CD8-positive, alpha-beta memory T cell (primary cell): ENCODE measurements at regions of chr17 and their contacts with region 1.

Region 1: DNA sequence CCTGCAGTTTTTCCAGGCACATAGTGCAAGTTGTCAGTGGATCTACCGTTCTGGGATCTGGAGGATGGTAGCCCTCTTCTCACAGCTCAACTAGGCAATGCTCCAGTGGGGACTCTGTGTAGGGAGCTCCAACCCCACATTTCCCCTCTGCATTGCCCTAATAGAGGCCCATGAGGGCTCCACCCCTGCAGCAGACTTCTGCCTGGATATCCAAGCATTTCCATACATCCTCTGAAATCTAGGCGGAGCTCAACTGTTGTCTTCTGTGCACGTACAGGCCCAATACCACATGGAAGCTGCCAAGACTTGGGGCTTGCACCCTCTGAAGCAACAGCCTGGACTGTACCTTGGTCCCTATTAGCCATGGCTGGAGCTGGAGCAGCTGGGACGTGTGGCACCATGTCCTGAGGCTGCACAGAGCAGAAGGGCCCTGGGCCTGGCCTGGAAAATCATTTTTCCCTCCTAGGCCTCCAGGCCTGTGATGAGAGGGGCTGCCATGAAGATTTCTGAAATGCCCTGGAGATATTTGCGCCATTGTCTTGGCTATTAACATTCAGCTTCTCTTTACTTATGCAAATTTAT is 10.9 kb upstream of the MILR1 start:
- DNase-seq: no peak
- H3K4me3 ChIP-seq: no peak overlapping the region
- H3K4me3 Mint-ChIP-seq: no peak overlapping the region
- H3K27ac ChIP-seq: no peak overlapping the region
- H3K27ac Mint-ChIP-seq: no peak overlapping the region
- H3K4me1 ChIP-seq: peaks cover 19% of the 10 kb centered on the region
- H3K4me1 Mint-ChIP-seq: peaks cover 12 to 18% (median 14%) of the 10 kb centered on the region in 3 donors
- H3K27me3 ChIP-seq: no peaks in the 10 kb centered on the region
- H3K27me3 Mint-ChIP-seq: peaks cover 3% of the 10 kb centered on the region in 2 donors

Region 2: GRCh38 chr17:64479650-64480049 is 41.6 kb after region 1 on chr17:
- CTCF ChIA-PET with region 1: no interaction called
- POLR2A ChIA-PET with region 1: interaction called, 11 read pairs
- DNase-seq: no peak
- H3K4me3 ChIP-seq: no peak overlapping the region
- H3K4me3 Mint-ChIP-seq: no peak overlapping the region
- H3K27ac ChIP-seq: no peak overlapping the region
- H3K27ac Mint-ChIP-seq: peak overlapping the region in 2 of 8 donors; percentile 20 to 76
- H3K4me1 ChIP-seq: peaks cover 3% of the 10 kb centered on the region
- H3K4me1 Mint-ChIP-seq: peaks cover 4 to 13% (median 13%) of the 10 kb centered on the region in 3 donors
- H3K27me3 ChIP-seq: no peaks in the 10 kb centered on the region
- H3K27me3 Mint-ChIP-seq: no peaks in the 10 kb centered on the region